Left lung (tissue), 14 donors: ENCODE measurements at regions of chr12 and their contacts with region 1.

Region 1: GRCh38 chr12:54005853-54006686 is 2.7 kb upstream of the HOXC8 start:
- DNase-seq: peak; percentile 82 to 97 (median 86)
- ATAC-seq: peak; percentile 97
- H3K4me3 ChIP-seq: peak overlapping the region; percentile 17 to 25
- H3K27ac ChIP-seq: no peak overlapping the region
- H3K4me1 ChIP-seq: peaks cover 6 to 23% of the 10 kb centered on the region in 2 donors
- H3K27me3 ChIP-seq: peaks cover 93 to 98% of the 10 kb centered on the region in 2 donors
- CTCF ChIP-seq: peak; percentile 92 to 98

Region 2: GRCh38 chr12:54068418-54069070 is 62.5 kb after region 1 on chr12:
- intact Hi-C with region 1: no loop called
- DNase-seq: no peak
- ATAC-seq: no peak
- H3K4me3 ChIP-seq: no peak overlapping the region
- H3K27ac ChIP-seq: no peak overlapping the region
- H3K4me1 ChIP-seq: no peaks in the 10 kb centered on the region
- H3K27me3 ChIP-seq: peaks cover 20 to 84% of the 10 kb centered on the region in 2 donors
- CTCF ChIP-seq: no peak

Region 3: DNA sequence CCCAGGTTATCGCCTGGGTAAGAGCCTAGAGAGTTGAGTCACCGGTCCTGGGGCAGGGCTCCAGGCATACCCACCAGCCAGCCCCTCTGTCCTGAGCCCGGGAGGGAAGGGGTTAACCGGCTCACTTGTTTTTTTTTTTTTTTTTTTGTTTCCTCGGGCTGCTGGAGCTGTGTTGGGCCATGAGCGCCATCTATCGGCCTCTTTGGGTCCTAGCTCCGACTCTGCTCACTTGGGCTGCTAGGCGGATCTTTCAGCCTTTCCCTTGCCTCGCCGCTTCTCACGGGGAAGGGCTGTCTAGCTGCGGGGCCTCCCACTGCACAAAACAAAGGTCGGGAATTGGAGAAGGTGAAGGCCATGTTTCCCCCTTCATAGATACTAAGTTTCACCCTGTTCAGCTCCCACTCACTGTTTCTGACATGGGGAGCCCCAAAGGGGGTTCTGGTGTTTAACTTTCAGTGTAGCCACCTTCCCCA is 185.5 kb after region 1 on chr12:
- intact Hi-C with region 1: loop called (anchors 5 to 10 kb)
- DNase-seq: peak; percentile 81 to 93 (median 84)
- ATAC-seq: peak; percentile 80
- H3K4me3 ChIP-seq: no peak overlapping the region
- H3K27ac ChIP-seq: no peak overlapping the region
- H3K4me1 ChIP-seq: peaks cover 6 to 37% of the 10 kb centered on the region in 2 donors
- H3K27me3 ChIP-seq: peaks cover 4 to 63% of the 10 kb centered on the region in 2 donors
- CTCF ChIP-seq: peak; percentile 76 to 87

Region 4: GRCh38 chr12:54201001-54201794 is 195.1 kb after region 1 on chr12:
- intact Hi-C with region 1: loop called (anchors 5 to 10 kb)
- DNase-seq: peak in 3 of 4 donors; percentile 61 to 88 (median 69)
- ATAC-seq: peak; percentile 96
- H3K4me3 ChIP-seq: no peak overlapping the region
- H3K27ac ChIP-seq: no peak overlapping the region
- H3K4me1 ChIP-seq: peaks cover 0 to 9% of the 10 kb centered on the region in 2 donors
- H3K27me3 ChIP-seq: peaks cover 11 to 95% of the 10 kb centered on the region in 2 donors
- CTCF ChIP-seq: peak; percentile 97 to 99

Region 5: DNA sequence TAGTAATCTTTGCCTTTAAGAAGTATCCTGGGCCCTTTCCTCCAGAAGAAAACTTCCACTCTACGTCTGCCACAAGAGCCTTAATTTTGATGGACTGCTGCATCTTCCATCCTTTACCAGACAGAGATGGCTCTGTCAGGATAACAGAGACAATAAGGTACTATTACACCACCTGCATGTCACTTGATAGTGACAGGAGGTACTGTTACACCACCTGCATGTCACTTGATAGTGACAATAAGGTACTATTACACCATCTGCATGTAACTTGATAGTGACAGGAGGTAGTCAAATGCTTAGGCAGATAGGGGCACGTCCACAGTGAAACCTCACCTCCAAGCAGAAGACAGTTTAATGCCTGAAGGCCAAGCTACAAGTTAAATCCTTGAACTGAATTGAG is 1252.2 kb after region 1 on chr12:
- intact Hi-C with region 1: no loop called
- DNase-seq: no peak
- ATAC-seq: no peak
- H3K4me3 ChIP-seq: no peak overlapping the region
- H3K27ac ChIP-seq: no peak overlapping the region
- H3K4me1 ChIP-seq: no peaks in the 10 kb centered on the region
- H3K27me3 ChIP-seq: no peaks in the 10 kb centered on the region
- CTCF ChIP-seq: no peak